Mammary epithelial cell (primary cell): ENCODE measurements at regions of chr19 and their contacts with region 1.

Region 1: DNA sequence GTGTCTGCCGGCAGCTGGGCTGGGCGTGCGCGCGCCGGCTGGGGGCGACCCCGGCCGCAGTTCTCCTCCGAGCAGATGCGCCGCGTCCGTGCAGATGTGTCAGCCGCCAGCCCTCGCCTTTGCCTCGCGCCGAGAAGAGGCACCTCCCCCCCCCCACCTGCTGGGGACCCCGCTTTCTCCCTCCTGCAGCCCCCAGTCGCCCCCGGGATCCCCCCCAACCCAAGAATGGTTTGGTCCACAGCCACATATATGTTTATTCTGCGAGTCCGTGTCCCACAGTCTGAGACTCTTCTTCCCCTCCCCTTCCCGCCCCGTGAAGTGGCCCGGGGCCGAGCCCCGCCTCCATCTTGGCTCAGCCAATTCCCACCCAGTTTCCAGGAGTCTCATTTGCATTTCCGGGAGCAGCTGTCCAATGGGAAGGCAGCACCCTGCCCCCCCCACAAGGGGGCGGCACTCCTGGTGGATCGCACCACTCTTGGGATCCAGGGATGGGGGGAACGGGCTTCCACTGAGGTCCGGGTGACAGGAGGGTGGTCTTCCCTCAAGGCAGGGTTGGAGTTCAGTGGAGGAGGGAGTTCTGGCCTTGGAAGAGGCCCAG is 8.6 kb downstream of the ISOC2 start:
- DNase-seq: peak; percentile 40
- H3K4me3 ChIP-seq: no peak overlapping the region
- H3K27ac ChIP-seq: no peak overlapping the region
- H3K4me1 ChIP-seq: peaks cover 12% of the 10 kb centered on the region
- H3K27me3 ChIP-seq: peaks cover 12% of the 10 kb centered on the region
- CTCF ChIP-seq: no peak

Region 2: DNA sequence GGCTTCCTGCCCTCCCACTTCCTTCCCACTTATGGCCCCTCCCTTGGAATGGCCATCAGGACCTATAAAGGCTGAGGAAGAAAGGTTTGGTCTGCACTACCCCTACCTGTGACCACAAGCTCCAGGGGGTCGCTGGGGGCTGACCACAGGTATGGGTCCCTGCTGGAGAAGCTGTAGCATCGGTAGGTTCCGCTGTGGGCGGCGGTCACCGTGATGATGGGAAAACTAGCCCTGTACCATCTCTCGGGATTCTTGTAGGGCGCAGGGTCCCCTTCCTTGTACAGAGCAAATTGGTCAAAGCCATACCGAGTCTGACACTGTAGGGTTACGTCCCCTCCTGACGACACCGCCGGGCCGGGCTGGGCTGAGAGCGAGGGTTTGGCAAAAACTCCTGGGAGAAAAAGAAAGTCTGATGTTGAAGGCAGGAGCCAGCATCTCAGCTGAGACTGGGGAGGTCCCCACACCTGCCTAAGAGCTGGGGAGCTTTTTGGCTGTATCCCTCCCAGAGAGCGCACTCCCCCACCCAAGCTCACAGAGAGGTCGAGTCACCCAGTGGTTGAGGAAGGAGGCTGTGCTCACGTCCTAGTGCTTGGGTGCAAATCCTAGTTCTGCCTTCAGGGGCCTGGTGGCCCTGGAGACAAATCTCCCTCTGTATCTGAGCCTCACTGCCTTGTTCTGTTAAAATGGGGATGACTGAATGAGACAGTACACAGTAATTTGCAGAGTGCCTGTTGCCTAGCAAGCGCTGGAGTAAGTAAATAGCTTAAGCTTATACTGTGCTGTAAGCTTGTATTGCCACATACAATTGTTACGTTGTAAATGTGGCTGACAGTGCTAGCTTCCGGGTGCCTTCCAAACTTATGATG is 425.1 kb before region 1 on chr19:
- CTCF ChIA-PET with region 1: no interaction called
- dilution Hi-C with region 1: no loop called
- in situ Hi-C with region 1: no loop called
- intact Hi-C with region 1: no loop called
- DNase-seq: no peak
- H3K4me3 ChIP-seq: no peak overlapping the region
- H3K27ac ChIP-seq: no peak overlapping the region
- H3K4me1 ChIP-seq: no peaks in the 10 kb centered on the region
- H3K27me3 ChIP-seq: no peaks in the 10 kb centered on the region
- CTCF ChIP-seq: no peak

Region 3: DNA sequence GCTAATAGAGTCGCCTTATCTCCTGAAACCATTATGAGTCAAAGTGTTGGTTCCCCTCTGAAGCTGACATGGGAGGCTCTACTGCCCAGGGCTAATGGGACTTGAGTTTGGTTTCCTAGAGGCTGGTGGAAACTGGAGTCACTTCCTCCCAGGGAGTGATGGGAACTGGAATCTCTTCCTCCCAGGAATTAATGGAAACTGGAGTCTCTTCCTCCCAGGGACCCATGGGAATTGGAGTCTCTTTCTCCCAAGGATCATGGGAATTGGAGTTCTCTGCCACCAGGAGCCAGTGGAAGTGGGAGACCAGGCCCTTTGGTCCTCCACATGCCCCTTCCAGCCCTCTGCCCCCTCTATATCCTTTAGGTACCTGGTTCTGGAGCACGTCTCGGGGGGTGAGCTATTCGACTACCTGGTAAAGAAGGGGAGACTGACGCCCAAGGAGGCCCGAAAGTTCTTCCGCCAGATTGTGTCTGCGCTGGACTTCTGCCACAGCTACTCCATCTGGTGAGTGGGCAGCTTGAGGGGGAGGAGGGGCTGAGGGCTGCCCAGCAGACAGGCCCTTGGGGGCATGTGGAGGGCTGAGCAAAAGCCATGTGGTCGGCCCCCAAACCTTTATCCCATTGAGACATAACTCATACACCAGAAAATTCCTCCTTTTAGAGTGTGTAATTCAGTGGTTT is 163.6 kb before region 1 on chr19:
- CTCF ChIA-PET with region 1: interaction called, 4 read pairs
- dilution Hi-C with region 1: no loop called
- in situ Hi-C with region 1: no loop called
- intact Hi-C with region 1: loop called (anchors 1 kb)
- DNase-seq: no peak
- H3K4me3 ChIP-seq: no peak overlapping the region
- H3K27ac ChIP-seq: no peak overlapping the region
- H3K4me1 ChIP-seq: no peaks in the 10 kb centered on the region
- H3K27me3 ChIP-seq: no peaks in the 10 kb centered on the region
- CTCF ChIP-seq: no peak

Region 4: DNA sequence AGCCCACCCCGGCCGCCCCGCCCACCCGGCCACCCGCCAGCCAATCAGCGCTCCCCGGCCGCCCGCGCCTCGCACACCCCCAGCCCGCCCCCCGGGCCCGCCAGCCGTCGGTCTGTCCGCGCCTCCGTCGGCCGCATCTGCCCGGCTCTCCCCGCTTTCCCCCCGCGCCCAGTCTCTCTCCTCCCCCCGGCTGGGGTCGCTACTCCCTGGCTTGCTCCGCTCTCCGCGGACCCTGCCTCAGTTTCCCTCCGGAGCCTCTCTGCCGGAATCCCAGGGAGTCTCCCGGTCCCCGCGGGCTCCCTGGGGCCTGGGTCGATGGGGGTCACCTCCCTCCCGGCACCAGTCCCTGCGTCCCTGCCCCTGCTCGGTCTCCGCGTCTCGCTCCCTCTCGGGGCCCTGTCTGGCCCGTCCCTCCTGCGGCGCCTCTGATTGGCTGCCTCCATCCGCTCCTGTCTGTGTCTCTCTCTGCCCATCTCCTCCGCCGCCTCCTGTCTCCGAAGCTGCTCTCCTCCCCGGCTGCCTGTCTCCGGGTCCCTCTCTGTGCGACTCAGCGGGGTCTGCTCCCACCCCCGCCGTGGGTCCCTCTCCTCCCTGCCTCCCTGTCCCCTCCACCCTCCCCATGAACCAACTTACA is 83.1 kb before region 1 on chr19:
- CTCF ChIA-PET with region 1: no interaction called
- dilution Hi-C with region 1: no loop called
- in situ Hi-C with region 1: no loop called
- intact Hi-C with region 1: no loop called
- DNase-seq: peak; percentile 50
- H3K4me3 ChIP-seq: peak overlapping the region; percentile 28 to 66 (median 62)
- H3K27ac ChIP-seq: peak overlapping the region; percentile 0
- H3K4me1 ChIP-seq: peaks cover 29% of the 10 kb centered on the region
- H3K27me3 ChIP-seq: no peaks in the 10 kb centered on the region
- CTCF ChIP-seq: no peak

Region 5: DNA sequence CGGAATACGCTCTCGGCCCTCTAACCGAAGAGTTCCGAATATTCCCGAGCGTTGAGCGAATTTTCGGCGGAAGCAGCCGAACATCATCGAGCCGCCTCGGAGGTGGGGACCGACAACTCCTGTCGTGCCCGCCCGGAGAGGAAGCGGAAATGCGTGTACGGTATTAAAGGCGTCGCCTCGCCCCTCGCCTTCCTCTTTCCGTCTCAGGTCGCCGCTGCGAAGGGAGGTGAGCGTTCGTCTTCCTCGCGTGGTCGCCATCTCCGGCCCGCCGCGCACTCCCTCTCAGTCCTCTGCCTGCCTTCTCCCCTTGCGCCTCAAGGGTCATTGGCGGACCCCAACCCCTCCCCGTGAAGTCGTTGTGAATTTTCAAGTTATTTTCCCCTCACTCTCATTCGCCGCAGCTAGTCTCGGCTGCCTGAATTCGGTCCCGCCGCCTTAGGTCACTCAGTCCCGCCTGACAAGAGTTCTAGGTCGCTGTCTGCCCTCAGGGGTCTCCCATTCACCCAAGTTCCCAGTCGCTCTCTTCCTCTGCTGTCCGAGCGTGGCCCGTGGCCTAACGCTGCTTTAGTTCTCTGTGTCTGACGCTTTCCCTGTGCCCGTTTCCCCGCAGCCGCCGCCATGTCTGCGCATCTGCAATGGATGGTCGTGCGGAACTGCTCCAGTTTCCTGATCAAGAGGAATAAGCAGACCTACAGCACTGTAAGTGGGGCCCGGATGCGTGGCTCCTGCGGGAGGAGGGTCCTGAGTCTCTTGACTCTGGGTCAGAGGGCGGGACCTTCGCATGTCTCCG is 66.9 kb before region 1 on chr19 and contains the start of gene RPL28:
- CTCF ChIA-PET with region 1: no interaction called
- dilution Hi-C with region 1: no loop called
- in situ Hi-C with region 1: no loop called
- intact Hi-C with region 1: no loop called
- DNase-seq: peak; percentile 96
- H3K4me3 ChIP-seq: peak within 1 kb of the TSS; percentile 74 to 98 (median 81)
- H3K27ac ChIP-seq: peak within 1 kb of the TSS; percentile 89
- H3K4me1 ChIP-seq: peaks cover 32% of the 10 kb centered on the region
- H3K27me3 ChIP-seq: no peaks in the 10 kb centered on the region
- CTCF ChIP-seq: no peak
- total RNA-seq, gene RPL28: 279 to 1,713 TPM